ENCODE measurements at regions of chr10 and their contacts with region 1.

Region 1: DNA sequence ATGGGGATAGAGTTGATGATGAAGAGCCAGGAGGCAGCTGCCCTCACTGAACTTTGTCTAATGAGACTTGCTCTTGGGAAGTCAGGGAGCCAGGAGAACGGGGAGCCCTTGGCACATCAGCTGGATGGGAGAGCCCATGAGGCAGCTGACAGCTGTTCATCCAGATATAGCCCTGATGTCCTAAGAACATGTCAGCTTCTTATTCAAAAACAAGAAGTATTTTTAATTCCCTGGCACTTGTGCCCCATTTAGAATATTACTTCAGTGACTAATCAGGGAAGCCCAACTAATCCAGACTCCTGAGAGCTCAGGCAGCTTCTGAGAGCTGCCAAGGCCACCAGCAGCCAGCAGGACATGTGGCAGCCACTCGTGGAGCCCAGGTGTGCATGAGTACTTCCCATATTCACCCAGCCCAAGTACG is 363.4 kb downstream of the GRID1 start:
- DNase-seq: peak; percentile 43 to 53
- ATAC-seq: peak; percentile 78 to 97
- H3K4me3 ChIP-seq: no peak overlapping the region
- H3K27ac ChIP-seq: peak overlapping the region in 3 of 4 donors; percentile 40 to 64 (median 62)
- H3K4me1 ChIP-seq: peaks cover 12 to 18% of the 10 kb centered on the region in 2 donors
- H3K27me3 ChIP-seq: no peaks in the 10 kb centered on the region
- CTCF ChIP-seq: no peak
- POLR2A ChIP-seq: no peak

Region 2: DNA sequence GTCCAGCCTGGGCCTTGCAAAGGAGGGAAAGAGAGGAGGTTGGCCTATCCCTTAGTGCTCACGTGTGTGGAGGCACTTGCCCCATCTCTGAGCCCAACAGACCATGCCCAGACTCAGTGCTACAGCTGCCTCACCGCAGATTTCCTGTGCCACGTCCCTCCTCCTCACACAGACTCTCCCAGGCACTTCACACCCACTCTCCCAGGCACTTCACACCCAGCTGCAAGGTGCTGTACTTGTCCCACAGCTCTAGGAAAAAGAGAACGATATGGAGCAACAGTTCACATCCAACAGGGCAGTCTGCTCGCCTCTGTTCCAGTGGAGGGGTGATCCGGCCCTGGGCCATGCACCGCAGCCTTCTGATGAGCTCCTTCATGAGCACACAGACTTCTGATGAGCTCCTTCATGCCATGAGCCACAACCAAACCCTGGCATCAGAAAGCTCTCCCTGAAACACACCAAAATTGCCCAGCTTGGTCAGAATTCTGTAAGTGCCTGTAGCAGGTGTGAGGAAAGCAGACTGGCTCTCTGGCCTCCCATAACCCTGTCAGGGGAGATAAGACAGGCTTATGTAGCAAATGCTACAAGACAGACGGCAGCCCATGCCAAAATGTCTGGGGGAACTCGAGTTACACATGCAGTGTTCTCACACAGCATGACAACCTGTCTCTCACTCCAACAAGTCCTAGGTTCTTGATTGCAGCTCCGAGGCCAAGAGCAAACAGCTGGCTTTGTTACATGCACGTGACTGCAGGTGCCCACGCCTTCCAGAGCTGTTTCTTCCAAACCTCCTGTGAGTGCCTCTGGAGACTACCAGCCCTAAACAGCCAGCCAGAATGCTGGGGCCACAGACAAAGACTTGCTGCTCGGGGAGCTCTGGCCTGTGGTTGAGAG is 14.9 kb after region 1 on chr10:
- in situ Hi-C with region 1: no loop called
- intact Hi-C with region 1: loop called (anchors 2 kb)
- DNase-seq: peak; percentile 43 to 44
- ATAC-seq: peak; percentile 61 to 91
- H3K4me3 ChIP-seq: no peak overlapping the region
- H3K27ac ChIP-seq: peak overlapping the region in 1 of 4 donors; percentile 67
- H3K4me1 ChIP-seq: peaks cover 9 to 27% of the 10 kb centered on the region in 2 donors
- H3K27me3 ChIP-seq: no peaks in the 10 kb centered on the region
- CTCF ChIP-seq: no peak
- POLR2A ChIP-seq: no peak

Region 3: GRCh38 chr10:86035791-86036543 is 32.8 kb after region 1 on chr10:
- in situ Hi-C with region 1: no loop called
- intact Hi-C with region 1: loop called (anchors 5 kb)
- DNase-seq: peak; percentile 20 to 22
- ATAC-seq: peak; percentile 41 to 75
- H3K4me3 ChIP-seq: no peak overlapping the region
- H3K27ac ChIP-seq: no peak overlapping the region
- H3K4me1 ChIP-seq: peaks cover 10% of the 10 kb centered on the region in 2 donors
- H3K27me3 ChIP-seq: no peaks in the 10 kb centered on the region
- CTCF ChIP-seq: no peak
- POLR2A ChIP-seq: no peak

Measured in gastrocnemius medialis (tissue), 4 donors.